ENCODE measurements at regions of chr12 and their contacts with region 1.

Region 1: DNA sequence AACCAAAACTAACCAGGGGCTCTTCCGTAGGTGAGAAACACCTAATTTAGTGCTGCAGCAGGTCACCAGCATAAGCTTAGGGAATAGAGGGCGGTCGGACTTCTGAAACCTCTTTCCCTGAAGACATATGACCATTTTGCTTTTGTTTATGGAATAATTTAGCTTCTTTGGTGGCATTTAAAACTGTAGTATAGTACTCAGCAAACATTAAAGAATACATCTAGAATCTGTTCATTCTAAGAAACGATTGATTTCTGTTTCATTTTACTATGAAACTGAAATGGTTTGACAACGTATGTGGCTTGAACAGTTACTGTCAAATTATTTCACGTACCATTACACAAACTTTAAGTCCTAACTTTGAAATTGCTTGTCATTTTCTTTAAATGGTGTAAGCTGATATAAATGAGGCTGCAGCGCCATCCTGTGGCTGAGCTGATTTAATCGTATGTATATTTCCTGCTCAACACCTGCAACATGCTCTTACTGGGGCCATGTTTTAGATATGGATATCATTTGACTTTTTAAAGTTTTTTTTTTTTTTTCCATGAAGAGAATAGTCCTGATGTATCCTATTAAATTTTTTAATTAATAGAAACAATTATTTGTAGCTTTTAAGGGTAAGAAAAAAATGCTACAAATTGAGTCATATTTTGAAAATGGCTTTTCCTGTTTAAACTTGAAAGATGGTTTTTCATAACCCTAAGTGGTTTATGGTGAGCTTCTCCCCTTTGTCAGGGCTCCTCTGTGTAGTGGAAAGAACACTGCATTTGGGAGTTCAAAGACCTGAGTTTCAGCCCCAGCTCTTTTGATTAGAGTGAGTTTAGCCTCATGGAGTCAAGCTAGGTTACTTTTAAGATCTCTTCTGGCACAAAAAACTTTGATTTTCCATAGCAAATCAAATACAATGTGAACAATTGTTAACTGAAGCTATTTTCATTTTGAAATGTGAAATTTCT is 27.4 kb downstream of the CFAP54 start:
- DNase-seq: peak; percentile 73 to 91 (median 88)
- ATAC-seq: peak; percentile 89
- H3K4me3 ChIP-seq: no peak overlapping the region
- H3K4me3 Mint-ChIP-seq: peak overlapping the region; percentile 50
- H3K27ac ChIP-seq: no peak overlapping the region
- H3K27ac Mint-ChIP-seq: no peak overlapping the region
- H3K4me1 ChIP-seq: peaks cover 11% of the 10 kb centered on the region
- H3K4me1 Mint-ChIP-seq: peaks cover 11% of the 10 kb centered on the region
- H3K27me3 ChIP-seq: no peaks in the 10 kb centered on the region
- H3K27me3 Mint-ChIP-seq: no peaks in the 10 kb centered on the region
- CTCF ChIP-seq: peak; percentile 91

Region 2: DNA sequence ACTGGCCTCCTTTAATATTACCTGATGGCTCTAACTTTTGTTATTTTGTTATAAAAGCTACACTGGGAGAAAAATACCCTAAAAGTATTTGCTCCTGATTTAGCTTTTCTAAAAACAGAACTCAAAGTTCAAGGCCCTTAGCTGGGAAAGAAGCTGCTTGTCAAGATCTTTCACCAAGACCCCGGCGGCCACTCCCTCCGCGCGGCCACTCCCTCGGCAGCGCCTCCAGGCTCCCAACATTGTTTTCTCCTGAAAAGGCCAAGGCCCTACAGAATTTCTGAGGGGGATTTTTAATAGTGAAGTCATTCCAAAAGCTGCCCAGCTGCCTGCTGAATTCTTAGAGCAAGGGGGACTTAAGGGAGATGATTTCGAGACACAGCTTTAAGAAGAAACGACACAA is 822.6 kb before region 1 on chr12:
- CTCF ChIA-PET with region 1: no interaction called
- POLR2A ChIA-PET with region 1: no interaction called
- intact Hi-C with region 1: no loop called
- DNase-seq: no peak
- ATAC-seq: no peak
- H3K4me3 ChIP-seq: no peak overlapping the region
- H3K4me3 Mint-ChIP-seq: no peak overlapping the region
- H3K27ac ChIP-seq: no peak overlapping the region
- H3K27ac Mint-ChIP-seq: no peak overlapping the region
- H3K4me1 ChIP-seq: no peaks in the 10 kb centered on the region
- H3K4me1 Mint-ChIP-seq: no peaks in the 10 kb centered on the region
- H3K27me3 ChIP-seq: no peaks in the 10 kb centered on the region
- H3K27me3 Mint-ChIP-seq: peaks cover 4% of the 10 kb centered on the region
- CTCF ChIP-seq: no peak

Region 3: GRCh38 chr12:95918194-95918993 is 598.4 kb before region 1 on chr12:
- CTCF ChIA-PET with region 1: interaction called, 3 read pairs
- POLR2A ChIA-PET with region 1: no interaction called
- intact Hi-C with region 1: loop called in 1 of 2 experiments (anchors 5 kb)
- DNase-seq: peak in 8 of 9 experiments; percentile 3 to 77 (median 45)
- ATAC-seq: peak; percentile 99
- H3K4me3 ChIP-seq: no peak overlapping the region
- H3K4me3 Mint-ChIP-seq: no peak overlapping the region
- H3K27ac ChIP-seq: no peak overlapping the region
- H3K27ac Mint-ChIP-seq: no peak overlapping the region
- H3K4me1 ChIP-seq: no peaks in the 10 kb centered on the region
- H3K4me1 Mint-ChIP-seq: no peaks in the 10 kb centered on the region
- H3K27me3 ChIP-seq: no peaks in the 10 kb centered on the region
- H3K27me3 Mint-ChIP-seq: no peaks in the 10 kb centered on the region
- CTCF ChIP-seq: peak; percentile 81

Region 4: DNA sequence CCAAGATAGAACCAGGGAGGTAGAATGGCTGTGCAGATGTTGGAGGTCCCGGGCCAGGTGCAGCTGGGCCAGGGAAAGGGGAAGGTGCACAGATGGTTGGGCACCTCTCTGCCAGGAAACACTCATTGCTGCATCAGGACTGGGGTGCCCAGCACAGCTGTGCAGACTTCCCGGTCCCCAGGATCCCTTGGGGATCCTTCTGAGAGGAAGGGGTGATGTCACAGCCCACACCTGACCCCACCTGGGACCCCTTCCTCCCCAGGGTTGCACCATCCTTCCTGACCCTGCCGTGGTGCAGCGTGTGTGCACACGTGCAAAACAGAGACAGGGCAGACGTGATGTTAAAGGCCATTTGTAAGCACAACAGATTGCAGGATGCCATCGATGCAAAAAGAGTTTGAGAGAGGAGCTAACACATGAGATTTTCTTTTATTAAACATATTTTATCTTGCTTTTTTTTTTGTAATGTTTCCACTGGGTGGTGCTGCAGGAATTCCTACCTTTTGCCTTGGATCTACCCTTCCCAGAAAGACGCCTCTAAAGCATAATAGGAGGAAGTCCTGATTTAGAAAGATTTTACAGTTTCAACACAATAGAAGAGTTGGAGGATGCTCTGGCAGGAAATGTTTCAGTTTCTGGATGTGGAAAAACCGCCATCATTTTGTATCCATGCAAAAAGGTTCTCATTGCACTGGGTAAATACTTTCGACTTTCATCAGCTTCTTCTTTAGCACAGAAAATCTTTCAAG is 307.8 kb before region 1 on chr12:
- CTCF ChIA-PET with region 1: interaction called, 129 read pairs
- POLR2A ChIA-PET with region 1: interaction called, 5 read pairs
- intact Hi-C with region 1: no loop called
- DNase-seq: peak in 1 of 9 experiments; percentile 48
- ATAC-seq: no peak
- H3K4me3 ChIP-seq: no peak overlapping the region
- H3K4me3 Mint-ChIP-seq: peak overlapping the region; percentile 30
- H3K27ac ChIP-seq: no peak overlapping the region
- H3K27ac Mint-ChIP-seq: peak overlapping the region; percentile 6
- H3K4me1 ChIP-seq: peaks cover 84% of the 10 kb centered on the region
- H3K4me1 Mint-ChIP-seq: peaks cover 93% of the 10 kb centered on the region
- H3K27me3 ChIP-seq: no peaks in the 10 kb centered on the region
- H3K27me3 Mint-ChIP-seq: no peaks in the 10 kb centered on the region
- CTCF ChIP-seq: no peak

Region 5: GRCh38 chr12:96294831-96295230 is 221.9 kb before region 1 on chr12:
- CTCF ChIA-PET with region 1: interaction called, 5 read pairs
- POLR2A ChIA-PET with region 1: no interaction called
- intact Hi-C with region 1: loop called in 1 of 2 experiments (anchors 5 kb)
- DNase-seq: peak in 2 of 9 experiments; percentile 37 to 56
- ATAC-seq: peak; percentile 29
- H3K4me3 ChIP-seq: no peak overlapping the region
- H3K4me3 Mint-ChIP-seq: no peak overlapping the region
- H3K27ac ChIP-seq: peak overlapping the region in 1 of 2 experiments; percentile 3
- H3K27ac Mint-ChIP-seq: no peak overlapping the region
- H3K4me1 ChIP-seq: peaks cover 13% of the 10 kb centered on the region
- H3K4me1 Mint-ChIP-seq: peaks cover 24% of the 10 kb centered on the region
- H3K27me3 ChIP-seq: no peaks in the 10 kb centered on the region
- H3K27me3 Mint-ChIP-seq: no peaks in the 10 kb centered on the region
- CTCF ChIP-seq: no peak

Region 6: DNA sequence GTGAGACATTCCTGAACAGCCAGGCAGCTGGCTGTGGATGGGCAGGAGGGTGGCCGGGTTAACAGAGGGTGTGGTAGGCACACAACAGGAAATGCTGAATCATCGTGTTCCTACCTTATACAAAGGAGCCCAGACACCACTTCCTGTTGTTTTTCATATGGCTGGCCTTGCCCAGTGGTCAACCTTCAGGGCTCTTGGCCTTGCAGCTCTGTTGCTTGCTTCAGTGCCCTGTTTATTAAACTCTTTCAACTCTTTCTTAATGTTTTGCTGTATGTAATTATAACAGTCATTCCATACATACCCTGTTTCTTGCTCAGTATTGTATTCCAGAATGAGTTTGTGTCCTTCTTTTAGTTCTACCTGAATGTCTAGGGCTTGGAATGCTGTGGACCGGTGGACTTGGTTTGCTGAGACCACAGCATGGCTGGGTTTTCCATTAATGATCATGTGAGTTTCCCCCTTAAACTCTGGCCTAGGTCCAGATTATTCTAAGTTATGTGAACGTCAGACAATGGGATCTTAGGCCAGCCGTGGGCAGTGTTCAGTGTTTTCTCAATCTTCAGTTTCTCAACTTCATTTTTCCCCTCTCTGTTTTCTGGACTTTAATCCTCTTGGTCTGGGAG is 15.5 kb before region 1 on chr12:
- CTCF ChIA-PET with region 1: interaction called, 22 read pairs
- POLR2A ChIA-PET with region 1: interaction called, 3 read pairs
- intact Hi-C with region 1: loop called in 1 of 2 experiments (anchors 2 kb)
- DNase-seq: peak in 8 of 9 experiments; percentile 23 to 75 (median 48)
- ATAC-seq: peak; percentile 79
- H3K4me3 ChIP-seq: no peak overlapping the region
- H3K4me3 Mint-ChIP-seq: peak overlapping the region; percentile 52
- H3K27ac ChIP-seq: peak overlapping the region in 1 of 2 experiments; percentile 76
- H3K27ac Mint-ChIP-seq: peak overlapping the region; percentile 87
- H3K4me1 ChIP-seq: peaks cover 33% of the 10 kb centered on the region
- H3K4me1 Mint-ChIP-seq: peaks cover 42% of the 10 kb centered on the region
- H3K27me3 ChIP-seq: no peaks in the 10 kb centered on the region
- H3K27me3 Mint-ChIP-seq: no peaks in the 10 kb centered on the region
- CTCF ChIP-seq: no peak